ENCODE measurements at regions of chr12 and their contacts with region 1.

Region 1: GRCh38 chr12:47032644-47033043 is 46.8 kb upstream of the PCED1B start:
- DNase-seq: peak; percentile 78
- ATAC-seq: peak; percentile 58
- H3K4me3 ChIP-seq: no peak overlapping the region
- H3K27ac ChIP-seq: no peak overlapping the region
- H3K4me1 ChIP-seq: peaks cover 44% of the 10 kb centered on the region
- H3K27me3 ChIP-seq: no peaks in the 10 kb centered on the region
- CTCF ChIP-seq: peak; percentile 81

Region 2: GRCh38 chr12:47247433-47247832 is 214.8 kb after region 1 on chr12:
- CTCF ChIA-PET with region 1: no interaction called
- POLR2A ChIA-PET with region 1: no interaction called
- intact Hi-C with region 1: loop called (anchors 10 kb)
- DNase-seq: peak; percentile 91
- ATAC-seq: peak; percentile 61
- H3K4me3 ChIP-seq: no peak overlapping the region
- H3K27ac ChIP-seq: peak overlapping the region; percentile 82
- H3K4me1 ChIP-seq: peaks cover 58% of the 10 kb centered on the region
- H3K27me3 ChIP-seq: no peaks in the 10 kb centered on the region
- CTCF ChIP-seq: no peak

Region 3: GRCh38 chr12:47307680-47308399 is 275.2 kb after region 1 on chr12:
- CTCF ChIA-PET with region 1: interaction called, 4 read pairs
- POLR2A ChIA-PET with region 1: no interaction called
- intact Hi-C with region 1: loop called (anchors 1 kb)
- DNase-seq: peak; percentile 84
- ATAC-seq: peak; percentile 100
- H3K4me3 ChIP-seq: no peak overlapping the region
- H3K27ac ChIP-seq: no peak overlapping the region
- H3K4me1 ChIP-seq: peaks cover 8% of the 10 kb centered on the region; the same call in 1 of the 2 replicates
- H3K27me3 ChIP-seq: no peaks in the 10 kb centered on the region
- CTCF ChIP-seq: peak; percentile 94

Region 4: GRCh38 chr12:47547085-47547484 is 514.4 kb after region 1 on chr12:
- CTCF ChIA-PET with region 1: no interaction called
- POLR2A ChIA-PET with region 1: no interaction called
- intact Hi-C with region 1: loop called (anchors 10 kb)
- DNase-seq: peak; percentile 70
- ATAC-seq: peak; percentile 73
- H3K4me3 ChIP-seq: no peak overlapping the region
- H3K27ac ChIP-seq: no peak overlapping the region
- H3K4me1 ChIP-seq: peaks cover 8% of the 10 kb centered on the region; the same call in 1 of the 2 replicates
- H3K27me3 ChIP-seq: peaks cover 18% of the 10 kb centered on the region
- CTCF ChIP-seq: peak; percentile 77

Region 5: GRCh38 chr12:47686645-47687240 is 654.1 kb after region 1 on chr12:
- CTCF ChIA-PET with region 1: interaction called, 5 read pairs
- POLR2A ChIA-PET with region 1: no interaction called
- intact Hi-C with region 1: loop called (anchors 1 kb)
- DNase-seq: peak; percentile 55
- ATAC-seq: no peak
- H3K4me3 ChIP-seq: no peak overlapping the region
- H3K27ac ChIP-seq: no peak overlapping the region
- H3K4me1 ChIP-seq: no peaks in the 10 kb centered on the region
- H3K27me3 ChIP-seq: no peaks in the 10 kb centered on the region
- CTCF ChIP-seq: peak; percentile 72